ENCODE measurements at regions of chr7 and their contacts with region 1.

Region 1: GRCh38 chr7:127794136-127794535 is 142.1 kb downstream of the SND1 start:
- DNase-seq: no peak
- ATAC-seq: no peak
- H3K4me3 ChIP-seq: no peak overlapping the region
- H3K4me3 Mint-ChIP-seq: no peak overlapping the region
- H3K27ac ChIP-seq: no peak overlapping the region
- H3K27ac Mint-ChIP-seq: no peak overlapping the region
- H3K4me1 ChIP-seq: peaks cover 8% of the 10 kb centered on the region
- H3K4me1 Mint-ChIP-seq: peaks cover 35% of the 10 kb centered on the region
- H3K27me3 ChIP-seq: no peaks in the 10 kb centered on the region
- H3K27me3 Mint-ChIP-seq: no peaks in the 10 kb centered on the region
- CTCF ChIP-seq: no peak

Region 2: GRCh38 chr7:127833641-127834040 is 39.5 kb after region 1 on chr7:
- CTCF ChIA-PET with region 1: interaction called, 3 read pairs
- POLR2A ChIA-PET with region 1: no interaction called
- intact Hi-C with region 1: loop called in 1 of 2 experiments (anchors 2 kb)
- DNase-seq: no peak
- ATAC-seq: no peak
- H3K4me3 ChIP-seq: no peak overlapping the region
- H3K4me3 Mint-ChIP-seq: no peak overlapping the region
- H3K27ac ChIP-seq: no peak overlapping the region
- H3K27ac Mint-ChIP-seq: no peak overlapping the region
- H3K4me1 ChIP-seq: no peaks in the 10 kb centered on the region
- H3K4me1 Mint-ChIP-seq: peaks cover 4% of the 10 kb centered on the region
- H3K27me3 ChIP-seq: no peaks in the 10 kb centered on the region
- H3K27me3 Mint-ChIP-seq: no peaks in the 10 kb centered on the region
- CTCF ChIP-seq: no peak

Region 3: GRCh38 chr7:127844707-127845331 is 50.7 kb after region 1 on chr7:
- CTCF ChIA-PET with region 1: no interaction called
- POLR2A ChIA-PET with region 1: no interaction called
- intact Hi-C with region 1: no loop called
- DNase-seq: no peak
- ATAC-seq: no peak
- H3K4me3 ChIP-seq: no peak overlapping the region
- H3K4me3 Mint-ChIP-seq: no peak overlapping the region
- H3K27ac ChIP-seq: no peak overlapping the region
- H3K27ac Mint-ChIP-seq: no peak overlapping the region
- H3K4me1 ChIP-seq: no peaks in the 10 kb centered on the region
- H3K4me1 Mint-ChIP-seq: no peaks in the 10 kb centered on the region
- H3K27me3 ChIP-seq: no peaks in the 10 kb centered on the region
- H3K27me3 Mint-ChIP-seq: no peaks in the 10 kb centered on the region
- CTCF ChIP-seq: no peak

Measured in CD4-positive, alpha-beta T cell (primary cell).